ENCODE measurements at regions of chr13 and their contacts with region 1.

Region 1: DNA sequence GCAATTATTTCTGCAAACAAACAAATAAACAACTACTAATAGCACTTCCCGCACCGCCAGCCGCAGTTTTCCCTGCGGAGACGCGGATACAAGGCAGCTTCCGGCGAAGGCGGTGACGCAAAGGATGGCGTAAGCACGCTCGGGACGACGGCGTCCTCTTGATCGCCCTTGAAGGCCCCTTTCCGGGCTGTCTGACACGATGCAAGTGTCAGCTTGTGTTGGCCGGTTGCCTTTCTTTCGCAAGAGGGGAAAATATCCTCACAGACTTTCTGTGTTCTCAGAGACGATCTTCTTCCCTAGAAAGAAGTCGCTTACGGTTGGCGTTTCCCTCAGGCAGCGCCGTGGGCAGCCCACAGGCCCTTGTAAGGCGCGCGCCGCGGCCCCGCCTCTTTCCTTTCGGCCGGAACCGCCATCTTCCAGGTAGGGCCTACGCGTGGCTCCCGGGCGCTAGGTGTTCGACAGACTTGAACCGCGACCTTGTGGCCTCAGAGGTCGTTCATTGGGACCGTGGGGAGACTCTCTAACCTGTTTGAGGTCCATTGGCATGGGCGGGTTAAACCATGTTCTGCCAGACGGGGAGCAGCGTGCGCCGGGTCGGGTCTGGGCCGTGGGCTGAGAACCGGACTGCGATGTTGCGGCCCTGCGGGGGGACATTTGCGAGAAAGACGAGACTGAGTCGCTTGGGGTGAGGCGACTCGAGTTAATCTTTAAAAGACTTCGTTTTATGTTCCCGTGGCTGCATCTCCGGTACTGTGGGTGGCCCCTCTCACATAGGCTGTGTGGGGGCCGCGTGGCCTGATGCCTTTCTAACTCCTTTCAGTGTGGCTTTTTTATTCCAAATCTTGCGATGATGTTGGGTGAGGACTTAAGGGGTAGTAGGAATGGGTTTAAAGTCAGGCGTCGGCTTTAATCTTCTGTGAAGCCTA is at the start of gene RPL21:
- DNase-seq: peak; percentile 99
- ATAC-seq: peak; percentile 91
- H3K4me3 ChIP-seq: peak within 1 kb of the TSS; percentile 85 to 100 (median 95)
- H3K4me3 Mint-ChIP-seq: peak within 1 kb of the TSS; percentile 95
- H3K27ac ChIP-seq: peak within 1 kb of the TSS; percentile 93 to 96
- H3K27ac Mint-ChIP-seq: peak within 1 kb of the TSS; percentile 100
- H3K4me1 ChIP-seq: peaks cover 16 to 30% of the 10 kb centered on the region in 2 donors
- H3K4me1 Mint-ChIP-seq: peaks cover 48% of the 10 kb centered on the region
- H3K27me3 ChIP-seq: no peaks in the 10 kb centered on the region
- H3K27me3 Mint-ChIP-seq: no peaks in the 10 kb centered on the region
- CTCF ChIP-seq: no peak
- total RNA-seq, gene RPL21: 1,840 and 1,937 TPM in 2 replicates

Region 2: DNA sequence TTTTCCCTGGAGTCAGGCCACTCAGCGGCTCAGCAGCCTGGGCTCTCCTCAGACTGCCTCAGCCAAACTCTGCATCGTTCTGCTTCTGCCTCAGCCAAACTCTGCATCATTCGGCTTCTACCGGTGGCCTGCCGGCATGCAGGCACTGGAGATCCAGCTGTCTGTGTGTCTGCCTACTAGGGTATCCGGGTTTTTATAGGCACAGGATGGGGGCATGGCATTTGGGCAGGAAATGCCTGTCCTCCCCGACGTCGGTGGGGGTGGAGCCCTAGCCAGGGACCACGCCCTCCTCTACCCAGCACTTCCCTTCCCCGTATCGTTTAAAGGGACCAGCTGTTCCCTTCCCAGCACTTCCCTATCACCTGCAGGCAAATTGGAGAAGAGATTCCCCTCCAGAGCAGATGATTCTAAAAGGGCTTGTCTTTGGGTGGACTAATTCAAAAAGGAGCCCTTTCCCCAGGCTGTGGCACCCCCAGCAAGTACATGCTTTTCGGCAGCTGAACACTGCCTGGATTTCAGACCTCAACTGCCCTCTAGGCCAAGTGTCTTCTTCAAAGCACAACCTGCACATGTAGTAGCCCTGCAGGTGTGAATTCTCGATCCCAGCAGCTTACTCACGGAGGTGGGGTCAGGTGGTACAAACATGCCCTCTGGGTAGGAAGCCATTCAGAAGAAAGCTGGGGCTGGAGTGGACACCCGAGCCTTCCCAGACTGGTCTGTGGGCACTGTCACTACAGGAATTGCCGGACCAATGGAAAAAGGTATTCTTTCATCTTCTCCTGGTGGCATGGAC is 465.4 kb before region 1 on chr13:
- CTCF ChIA-PET with region 1: no interaction called
- POLR2A ChIA-PET with region 1: interaction called, 3 read pairs
- intact Hi-C with region 1: loop called (anchors 5 kb)
- DNase-seq: peak; percentile 77
- ATAC-seq: peak; percentile 62
- H3K4me3 ChIP-seq: peak overlapping the region; percentile 51 to 77 (median 64)
- H3K4me3 Mint-ChIP-seq: peak overlapping the region; percentile 93
- H3K27ac ChIP-seq: peak overlapping the region; percentile 68 to 87
- H3K27ac Mint-ChIP-seq: peak overlapping the region; percentile 90
- H3K4me1 ChIP-seq: peaks cover 15 to 23% of the 10 kb centered on the region in 2 donors
- H3K4me1 Mint-ChIP-seq: peaks cover 23% of the 10 kb centered on the region
- H3K27me3 ChIP-seq: peaks cover 0 to 5% (median 3%) of the 10 kb centered on the region in 4 experiments
- H3K27me3 Mint-ChIP-seq: peaks cover 12% of the 10 kb centered on the region
- CTCF ChIP-seq: no peak

Region 3: DNA sequence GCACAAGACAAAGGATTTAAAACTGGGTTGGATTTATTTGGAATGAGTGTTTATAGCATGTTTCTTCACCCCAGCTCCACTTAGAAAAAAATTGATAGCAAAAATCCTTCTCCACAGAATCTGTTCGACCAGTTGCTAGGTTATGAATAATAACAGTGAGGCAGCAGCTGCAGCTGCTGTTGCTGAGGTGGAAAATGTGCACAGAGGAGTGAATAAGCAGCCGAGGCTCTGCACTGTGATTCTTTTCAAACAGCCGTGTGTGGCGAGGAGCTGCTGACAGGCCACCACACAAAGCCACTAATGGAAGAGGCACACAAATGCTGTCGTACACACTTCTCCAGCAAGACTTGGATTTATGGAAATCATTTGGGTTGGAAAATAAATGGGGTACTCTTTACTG is 12.8 kb after region 1 on chr13:
- CTCF ChIA-PET with region 1: no interaction called
- POLR2A ChIA-PET with region 1: interaction called, 3 read pairs
- intact Hi-C with region 1: loop called (anchors 1 kb)
- DNase-seq: no peak
- ATAC-seq: no peak
- H3K4me3 ChIP-seq: no peak overlapping the region
- H3K4me3 Mint-ChIP-seq: no peak overlapping the region
- H3K27ac ChIP-seq: peak overlapping the region in 1 of 2 donors; percentile 28
- H3K27ac Mint-ChIP-seq: peak overlapping the region; percentile 22
- H3K4me1 ChIP-seq: peaks cover 22 to 28% of the 10 kb centered on the region in 2 donors
- H3K4me1 Mint-ChIP-seq: peaks cover 60% of the 10 kb centered on the region
- H3K27me3 ChIP-seq: no peaks in the 10 kb centered on the region
- H3K27me3 Mint-ChIP-seq: no peaks in the 10 kb centered on the region
- CTCF ChIP-seq: no peak

Region 4: DNA sequence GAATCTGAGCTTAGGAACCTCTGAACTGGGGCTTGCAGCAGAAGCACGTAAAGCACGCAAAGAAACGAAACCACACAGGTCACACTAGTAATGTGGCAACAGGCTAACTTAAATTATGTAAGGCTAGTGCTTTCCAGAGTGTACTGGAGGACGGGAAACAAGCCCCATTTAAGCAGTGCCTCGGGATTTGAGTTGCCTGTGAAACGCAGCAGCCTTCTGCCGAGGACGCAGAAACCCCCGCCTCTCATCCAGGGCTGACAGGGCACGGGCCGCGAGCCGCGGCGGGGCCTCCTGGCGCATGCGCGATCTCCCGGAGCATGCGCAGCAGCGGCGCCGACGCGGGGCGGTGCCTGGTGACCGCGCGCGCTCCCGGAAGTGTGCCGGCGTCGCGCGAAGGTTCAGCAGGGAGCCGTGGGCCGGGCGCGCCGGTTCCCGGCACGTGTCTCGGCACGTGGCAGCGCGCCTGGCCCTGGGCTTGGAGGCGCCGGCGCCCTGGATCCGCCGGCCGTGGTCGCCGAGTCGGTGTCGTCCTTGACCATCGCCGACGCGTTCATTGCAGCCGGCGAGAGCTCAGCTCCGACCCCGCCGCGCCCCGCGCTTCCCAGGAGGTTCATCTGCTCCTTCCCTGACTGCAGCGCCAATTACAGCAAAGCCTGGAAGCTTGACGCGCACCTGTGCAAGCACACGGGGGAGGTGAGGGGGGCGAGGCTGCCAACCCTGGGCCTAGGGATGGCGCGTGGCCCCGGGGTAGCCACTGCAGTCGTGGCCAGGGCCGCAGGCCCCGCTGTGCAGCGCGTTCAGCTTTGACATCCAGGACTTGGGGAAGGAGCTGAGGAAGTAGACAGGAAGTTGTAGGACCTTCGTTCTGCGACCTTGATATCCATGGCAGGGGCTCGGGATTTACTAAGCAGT is 173.1 kb after region 1 on chr13 and contains the start of gene GTF3A:
- CTCF ChIA-PET with region 1: no interaction called
- POLR2A ChIA-PET with region 1: no interaction called
- intact Hi-C with region 1: loop called (anchors 1 kb)
- DNase-seq: peak; percentile 96
- ATAC-seq: peak; percentile 66
- H3K4me3 ChIP-seq: peak within 1 kb of the TSS; percentile 74 to 97 (median 83)
- H3K4me3 Mint-ChIP-seq: peak within 1 kb of the TSS; percentile 82
- H3K27ac ChIP-seq: peak within 1 kb of the TSS; percentile 78 to 88
- H3K27ac Mint-ChIP-seq: peak within 1 kb of the TSS; percentile 88
- H3K4me1 ChIP-seq: peaks cover 25 to 36% of the 10 kb centered on the region in 2 donors
- H3K4me1 Mint-ChIP-seq: peaks cover 39% of the 10 kb centered on the region
- H3K27me3 ChIP-seq: no peaks in the 10 kb centered on the region
- H3K27me3 Mint-ChIP-seq: no peaks in the 10 kb centered on the region
- CTCF ChIP-seq: no peak
- total RNA-seq, gene GTF3A: 114 and 122 TPM in 2 replicates

Region 5: GRCh38 chr13:27620377-27621115 is 369.1 kb after region 1 on chr13 and contains the start of gene LNX2:
- CTCF ChIA-PET with region 1: no interaction called
- POLR2A ChIA-PET with region 1: no interaction called
- intact Hi-C with region 1: loop called (anchors 1 kb)
- DNase-seq: peak; percentile 96
- ATAC-seq: peak; percentile 83
- H3K4me3 ChIP-seq: peak within 1 kb of the TSS; percentile 77 to 92 (median 90)
- H3K4me3 Mint-ChIP-seq: peak within 1 kb of the TSS; percentile 93
- H3K27ac ChIP-seq: peak within 1 kb of the TSS; percentile 98
- H3K27ac Mint-ChIP-seq: peak within 1 kb of the TSS; percentile 92
- H3K4me1 ChIP-seq: peaks cover 27 to 28% of the 10 kb centered on the region in 2 donors
- H3K4me1 Mint-ChIP-seq: peaks cover 62% of the 10 kb centered on the region
- H3K27me3 ChIP-seq: no peaks in the 10 kb centered on the region
- H3K27me3 Mint-ChIP-seq: no peaks in the 10 kb centered on the region
- CTCF ChIP-seq: no peak
- total RNA-seq, gene LNX2: 10.0 and 10.9 TPM in 2 replicates

Measured in B cell (primary cell).